CD8-positive, alpha-beta memory T cell (primary cell): ENCODE measurements at regions of chr5 and their contacts with region 1.

Region 1: GRCh38 chr5:150846654-150847333 is 473 bp downstream of the IRGM start:
- DNase-seq: peak; percentile 32 to 76 (median 71)
- H3K4me3 ChIP-seq: peak overlapping the region; percentile 9
- H3K4me3 Mint-ChIP-seq: peak overlapping the region; percentile 56 to 92 (median 89)
- H3K27ac ChIP-seq: no peak overlapping the region
- H3K27ac Mint-ChIP-seq: peak overlapping the region; percentile 62 to 97 (median 93)
- H3K4me1 ChIP-seq: no peaks in the 10 kb centered on the region
- H3K4me1 Mint-ChIP-seq: peaks cover 23 to 29% (median 28%) of the 10 kb centered on the region in 3 donors
- H3K27me3 ChIP-seq: no peaks in the 10 kb centered on the region
- H3K27me3 Mint-ChIP-seq: peaks cover 0 to 2% of the 10 kb centered on the region in 2 donors

Region 2: DNA sequence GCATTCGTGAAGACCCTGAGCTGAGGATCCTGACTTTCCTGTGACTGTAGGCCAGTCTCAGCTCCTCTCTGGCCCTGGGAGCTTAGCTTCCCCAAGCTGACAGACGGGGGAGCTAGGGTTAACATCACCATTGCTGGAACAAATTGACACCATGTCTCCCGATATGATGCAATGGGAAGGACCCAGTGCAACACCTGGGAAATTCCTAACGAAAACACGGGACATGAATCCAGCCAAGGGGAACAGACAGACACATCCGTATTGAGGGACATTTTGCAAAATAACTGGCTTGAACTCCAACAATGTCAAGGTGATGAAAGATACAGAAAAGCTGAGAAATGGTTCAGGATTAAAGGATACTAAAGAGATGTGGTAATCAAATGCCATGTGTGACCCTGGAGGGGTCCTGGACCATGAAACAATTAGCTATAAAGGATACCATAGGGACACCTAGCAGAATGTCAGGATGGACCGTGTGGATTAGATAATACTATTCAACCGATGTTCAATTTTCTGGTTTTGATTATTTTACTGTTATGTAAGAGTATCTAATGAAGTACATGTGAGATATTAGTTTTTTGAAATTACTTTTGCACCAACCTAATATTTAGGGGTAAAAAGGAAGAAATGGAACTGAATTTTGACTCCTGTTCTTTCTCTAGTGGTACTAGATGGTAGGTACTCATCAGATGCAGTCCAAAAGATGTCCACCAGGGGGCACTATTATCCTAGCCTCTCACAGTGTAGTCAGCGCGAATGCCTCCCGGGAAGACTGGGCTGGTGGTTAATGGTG is 286.2 kb before region 1 on chr5:
- CTCF ChIA-PET with region 1: interaction called, 52 read pairs
- POLR2A ChIA-PET with region 1: no interaction called
- DNase-seq: peak; percentile 70 to 85 (median 78)
- H3K4me3 ChIP-seq: no peak overlapping the region
- H3K4me3 Mint-ChIP-seq: no peak overlapping the region
- H3K27ac ChIP-seq: no peak overlapping the region
- H3K27ac Mint-ChIP-seq: no peak overlapping the region
- H3K4me1 ChIP-seq: no peaks in the 10 kb centered on the region
- H3K4me1 Mint-ChIP-seq: no peaks in the 10 kb centered on the region
- H3K27me3 ChIP-seq: peaks cover 3% of the 10 kb centered on the region
- H3K27me3 Mint-ChIP-seq: peaks cover 5 to 10% of the 10 kb centered on the region in 2 donors

Region 3: GRCh38 chr5:150700594-150701293 is 146.1 kb before region 1 on chr5 and contains the start of gene RBM22:
- CTCF ChIA-PET with region 1: interaction called, 29 read pairs
- POLR2A ChIA-PET with region 1: interaction called, 14 read pairs
- DNase-seq: peak; percentile 87 to 94 (median 90)
- H3K4me3 ChIP-seq: peak within 1 kb of the TSS; percentile 88
- H3K4me3 Mint-ChIP-seq: peak within 1 kb of the TSS in 1 of 7 donors; percentile 82
- H3K27ac ChIP-seq: peak within 1 kb of the TSS; percentile 99
- H3K27ac Mint-ChIP-seq: no peak within 1 kb of the TSS
- H3K4me1 ChIP-seq: peaks cover 21% of the 10 kb centered on the region
- H3K4me1 Mint-ChIP-seq: no peaks in the 10 kb centered on the region
- H3K27me3 ChIP-seq: no peaks in the 10 kb centered on the region
- H3K27me3 Mint-ChIP-seq: no peaks in the 10 kb centered on the region
- total RNA-seq, gene RBM22: 72.7 to 73.6 TPM

Region 4: GRCh38 chr5:150758531-150759333 is 88.1 kb before region 1 on chr5 and contains the start of gene DCTN4:
- CTCF ChIA-PET with region 1: interaction called, 5 read pairs
- POLR2A ChIA-PET with region 1: interaction called, 11 read pairs
- DNase-seq: peak; percentile 91 to 95 (median 94)
- H3K4me3 ChIP-seq: peak within 1 kb of the TSS; percentile 92
- H3K4me3 Mint-ChIP-seq: peak within 1 kb of the TSS in 3 of 7 donors; percentile 48 to 72 (median 68)
- H3K27ac ChIP-seq: peak within 1 kb of the TSS; percentile 97
- H3K27ac Mint-ChIP-seq: peak within 1 kb of the TSS in 2 of 8 donors; percentile 3 to 45
- H3K4me1 ChIP-seq: peaks cover 34% of the 10 kb centered on the region
- H3K4me1 Mint-ChIP-seq: peaks cover 22 to 37% (median 31%) of the 10 kb centered on the region in 3 donors
- H3K27me3 ChIP-seq: no peaks in the 10 kb centered on the region
- H3K27me3 Mint-ChIP-seq: peaks cover 0 to 2% of the 10 kb centered on the region in 2 donors
- total RNA-seq, gene DCTN4: 37.0 to 39.6 TPM

Region 5: DNA sequence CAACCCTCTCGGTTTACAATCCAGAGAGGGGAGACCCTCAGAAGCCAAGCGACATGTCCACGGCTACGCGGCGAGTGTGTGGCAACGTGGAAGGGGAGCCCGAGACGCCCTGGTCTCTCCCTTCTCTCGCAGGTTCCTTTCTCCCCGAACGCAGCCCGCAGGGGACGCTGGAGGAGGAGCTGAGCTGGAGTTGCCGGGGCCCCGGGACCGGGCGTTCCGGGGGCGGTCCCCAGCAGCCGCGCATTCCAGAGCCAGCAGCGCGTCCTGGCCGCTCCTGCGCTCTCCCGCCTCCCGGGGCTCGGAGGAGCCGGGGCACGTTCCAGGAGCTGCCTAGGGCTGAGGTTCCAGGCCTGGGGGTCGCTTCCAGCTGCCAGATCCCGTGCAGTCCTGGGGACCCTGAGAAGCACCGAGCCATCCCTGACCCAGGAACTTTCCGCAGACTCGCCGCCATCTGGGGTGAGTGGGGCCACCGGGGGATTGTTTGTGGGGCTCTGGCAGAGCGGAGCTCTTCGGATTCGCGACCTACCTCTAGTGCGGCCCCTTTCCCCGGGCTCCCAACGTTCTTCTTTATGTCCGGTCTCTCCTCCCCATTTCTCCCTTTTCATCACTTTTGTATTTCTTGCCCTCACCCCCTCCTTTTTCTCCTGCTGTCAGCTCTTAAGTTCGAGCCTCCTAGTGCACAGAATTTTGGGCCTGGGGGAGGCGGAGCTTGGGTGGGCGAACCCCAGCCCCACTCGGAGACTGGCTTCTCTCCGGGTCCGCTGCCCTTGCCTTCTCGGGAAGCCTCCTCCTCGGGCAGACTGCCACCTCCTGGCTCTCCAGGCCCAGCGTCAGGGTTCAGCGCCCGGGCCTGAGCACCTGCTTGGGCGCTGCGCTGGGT is 68.0 kb before region 1 on chr5 and contains the start of gene SMIM3:
- CTCF ChIA-PET with region 1: interaction called, 19 read pairs
- POLR2A ChIA-PET with region 1: interaction called, 9 read pairs
- DNase-seq: peak; percentile 32 to 76 (median 48)
- H3K4me3 ChIP-seq: peak within 1 kb of the TSS; percentile 67
- H3K4me3 Mint-ChIP-seq: peak within 1 kb of the TSS; percentile 89 to 98 (median 95)
- H3K27ac ChIP-seq: peak within 1 kb of the TSS; percentile 59
- H3K27ac Mint-ChIP-seq: peak within 1 kb of the TSS; percentile 86 to 95 (median 92)
- H3K4me1 ChIP-seq: peaks cover 41% of the 10 kb centered on the region
- H3K4me1 Mint-ChIP-seq: peaks cover 51 to 63% (median 56%) of the 10 kb centered on the region in 3 donors
- H3K27me3 ChIP-seq: no peaks in the 10 kb centered on the region
- H3K27me3 Mint-ChIP-seq: peaks cover 6 to 7% of the 10 kb centered on the region in 2 donors
- total RNA-seq, gene SMIM3: 11.8 to 12.7 TPM

Region 6: DNA sequence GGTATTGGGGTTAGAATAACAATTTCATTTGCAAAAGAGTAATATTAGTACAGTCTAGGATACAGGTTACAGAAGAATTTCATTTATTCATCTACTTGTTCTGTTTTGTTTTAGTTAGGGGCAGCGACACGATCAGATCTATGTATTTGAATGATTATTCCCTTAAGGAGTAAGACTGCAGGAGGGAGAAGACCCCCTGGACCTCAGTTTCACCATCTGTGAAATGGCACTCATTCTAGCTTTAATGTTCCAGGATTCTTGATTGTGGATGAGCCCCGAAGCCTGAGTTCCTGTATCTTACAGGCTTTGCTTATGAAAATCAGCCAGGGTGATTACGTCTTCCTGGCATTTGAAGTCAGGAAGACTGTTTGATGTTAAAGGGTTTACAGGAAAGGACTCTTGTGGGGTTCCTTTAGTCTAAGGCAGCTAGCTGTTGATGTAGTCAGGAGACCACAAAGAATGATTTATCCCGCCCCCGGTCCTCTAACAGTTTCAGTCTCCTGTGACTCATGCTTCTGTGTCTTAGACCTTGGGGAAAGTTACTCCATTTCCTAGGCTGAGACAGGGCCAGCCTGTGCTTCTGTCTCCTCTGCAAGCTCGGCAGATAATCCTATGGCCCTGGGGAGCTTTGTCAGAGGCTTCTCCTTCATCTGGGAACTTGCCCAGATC is 56.7 kb before region 1 on chr5:
- CTCF ChIA-PET with region 1: interaction called, 13 read pairs
- POLR2A ChIA-PET with region 1: no interaction called
- DNase-seq: peak in 4 of 5 donors; percentile 12 to 69 (median 52)
- H3K4me3 ChIP-seq: peak overlapping the region; percentile 10
- H3K4me3 Mint-ChIP-seq: peak overlapping the region in 4 of 7 donors; percentile 1 to 35 (median 10)
- H3K27ac ChIP-seq: no peak overlapping the region
- H3K27ac Mint-ChIP-seq: peak overlapping the region in 6 of 8 donors; percentile 28 to 95 (median 68)
- H3K4me1 ChIP-seq: peaks cover 24% of the 10 kb centered on the region
- H3K4me1 Mint-ChIP-seq: peaks cover 26 to 56% (median 35%) of the 10 kb centered on the region in 3 donors
- H3K27me3 ChIP-seq: no peaks in the 10 kb centered on the region
- H3K27me3 Mint-ChIP-seq: no peaks in the 10 kb centered on the region

Region 7: DNA sequence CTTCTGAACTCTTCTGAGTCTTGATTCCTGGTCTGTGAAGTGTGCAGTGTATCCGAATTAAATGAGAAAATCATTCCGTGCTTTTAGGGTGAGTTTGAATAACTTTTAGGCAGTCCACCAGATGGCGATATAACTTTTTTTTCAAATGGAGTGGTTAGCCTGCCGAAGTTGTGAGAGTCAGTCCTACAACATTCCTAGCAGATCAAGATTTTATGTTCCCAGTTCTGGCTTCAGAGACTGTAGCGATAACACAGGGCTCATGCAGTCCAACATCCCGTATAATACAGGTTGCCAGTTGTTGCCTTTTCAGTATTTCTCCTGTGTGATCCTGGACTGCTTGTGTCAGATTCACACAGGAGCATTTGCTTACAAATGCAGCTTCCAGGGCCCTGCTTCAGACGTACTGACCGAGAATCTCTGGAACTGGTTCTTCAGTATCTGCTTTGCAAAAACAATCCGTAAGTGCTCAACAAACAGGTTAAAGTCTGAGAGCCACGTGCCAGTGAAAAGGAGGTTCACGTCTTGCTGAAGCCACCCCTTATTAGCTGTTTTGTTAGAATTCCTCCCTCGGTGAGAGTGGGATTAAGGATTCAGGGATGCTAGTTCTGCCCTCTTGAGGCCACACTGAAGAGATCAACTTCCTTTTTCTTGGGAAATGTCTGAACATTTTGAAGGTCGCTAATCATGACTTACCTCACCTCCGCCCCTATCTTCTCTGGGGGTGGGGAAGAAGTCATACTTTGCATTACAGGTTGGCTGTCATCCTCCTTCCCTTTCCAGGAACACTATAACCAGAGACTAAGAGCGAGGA is 45.5 kb before region 1 on chr5:
- CTCF ChIA-PET with region 1: interaction called, 78 read pairs
- POLR2A ChIA-PET with region 1: interaction called, 3 read pairs
- DNase-seq: peak in 2 of 5 donors; percentile 41 to 51
- H3K4me3 ChIP-seq: no peak overlapping the region
- H3K4me3 Mint-ChIP-seq: no peak overlapping the region
- H3K27ac ChIP-seq: no peak overlapping the region
- H3K27ac Mint-ChIP-seq: no peak overlapping the region
- H3K4me1 ChIP-seq: peaks cover 5% of the 10 kb centered on the region
- H3K4me1 Mint-ChIP-seq: peaks cover 0 to 5% (median 0%) of the 10 kb centered on the region in 3 donors
- H3K27me3 ChIP-seq: no peaks in the 10 kb centered on the region
- H3K27me3 Mint-ChIP-seq: peaks cover 5 to 15% of the 10 kb centered on the region in 2 donors

Region 8: GRCh38 chr5:150879358-150879757 is 32.6 kb after region 1 on chr5:
- CTCF ChIA-PET with region 1: no interaction called
- POLR2A ChIA-PET with region 1: no interaction called
- DNase-seq: no peak
- H3K4me3 ChIP-seq: no peak overlapping the region
- H3K4me3 Mint-ChIP-seq: no peak overlapping the region
- H3K27ac ChIP-seq: no peak overlapping the region
- H3K27ac Mint-ChIP-seq: no peak overlapping the region
- H3K4me1 ChIP-seq: no peaks in the 10 kb centered on the region
- H3K4me1 Mint-ChIP-seq: no peaks in the 10 kb centered on the region
- H3K27me3 ChIP-seq: no peaks in the 10 kb centered on the region
- H3K27me3 Mint-ChIP-seq: no peaks in the 10 kb centered on the region